Mammary epithelial cell (primary cell): ENCODE measurements at regions of chr12 and their contacts with region 1.

Region 1: DNA sequence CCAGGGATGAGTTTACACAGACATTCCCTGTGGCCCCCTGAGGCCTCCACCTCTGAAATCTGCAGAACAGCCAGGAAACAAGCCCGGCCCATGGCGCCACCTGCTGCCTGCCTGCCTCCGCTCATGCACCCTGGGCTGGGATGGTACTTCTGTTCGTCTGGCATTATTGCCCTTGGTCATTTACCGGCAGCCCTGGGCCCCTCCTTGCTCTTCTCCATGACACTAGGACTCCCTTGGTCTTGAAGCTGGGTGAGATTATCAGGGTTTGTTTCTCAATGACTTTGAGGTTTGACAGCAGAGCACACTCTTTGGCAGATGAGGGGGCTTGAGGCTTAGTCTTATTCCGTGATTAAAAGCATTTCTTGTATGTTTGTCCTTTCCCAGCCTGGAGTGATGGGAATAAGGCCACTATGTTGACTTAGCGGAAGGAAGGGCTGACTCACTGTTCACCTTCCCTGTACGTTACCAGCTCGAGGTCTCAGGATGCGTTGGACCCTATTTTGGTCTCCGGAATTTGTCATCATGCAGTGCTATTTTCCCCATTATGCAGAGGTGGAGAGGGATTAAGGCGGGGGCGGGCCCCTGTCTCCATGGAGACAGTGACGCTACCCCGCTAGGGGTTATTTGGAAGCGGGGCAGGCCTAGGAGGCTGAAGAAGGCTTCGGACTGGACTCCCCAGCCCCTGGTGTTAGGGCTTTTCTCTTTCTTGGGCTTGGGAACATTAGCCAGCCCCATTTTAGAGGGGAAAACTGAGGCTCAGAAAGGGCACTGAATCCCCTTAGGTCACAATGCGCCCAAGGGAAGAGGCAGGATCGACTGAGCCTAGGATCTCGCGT is 706 bp upstream of the PEX5 start:
- DNase-seq: peak; percentile 61
- H3K4me3 ChIP-seq: peak overlapping the region; percentile 45 to 99 (median 92)
- H3K27ac ChIP-seq: peak overlapping the region; percentile 76
- H3K4me1 ChIP-seq: peaks cover 18% of the 10 kb centered on the region
- H3K27me3 ChIP-seq: no peaks in the 10 kb centered on the region
- CTCF ChIP-seq: peak; percentile 73 to 92

Region 2: GRCh38 chr12:7142056-7142644 is 46.6 kb before region 1 on chr12:
- CTCF ChIA-PET with region 1: no interaction called
- dilution Hi-C with region 1: no loop called
- in situ Hi-C with region 1: no loop called
- intact Hi-C with region 1: loop called (anchors 1 kb)
- DNase-seq: peak; percentile 25
- H3K4me3 ChIP-seq: no peak overlapping the region
- H3K27ac ChIP-seq: no peak overlapping the region
- H3K4me1 ChIP-seq: no peaks in the 10 kb centered on the region
- H3K27me3 ChIP-seq: no peaks in the 10 kb centered on the region
- CTCF ChIP-seq: peak; percentile 75

Region 3: GRCh38 chr12:7162691-7163114 is 26.1 kb before region 1 on chr12:
- CTCF ChIA-PET with region 1: no interaction called
- dilution Hi-C with region 1: no loop called
- in situ Hi-C with region 1: no loop called
- intact Hi-C with region 1: loop called (anchors 1 kb)
- DNase-seq: peak; percentile 58
- H3K4me3 ChIP-seq: no peak overlapping the region
- H3K27ac ChIP-seq: no peak overlapping the region
- H3K4me1 ChIP-seq: peaks cover 2% of the 10 kb centered on the region
- H3K27me3 ChIP-seq: no peaks in the 10 kb centered on the region
- CTCF ChIP-seq: peak; percentile 80 to 92